Spleen (tissue), 13 donors: ENCODE measurements at regions of chr1 and their contacts with region 1.

Region 1: DNA sequence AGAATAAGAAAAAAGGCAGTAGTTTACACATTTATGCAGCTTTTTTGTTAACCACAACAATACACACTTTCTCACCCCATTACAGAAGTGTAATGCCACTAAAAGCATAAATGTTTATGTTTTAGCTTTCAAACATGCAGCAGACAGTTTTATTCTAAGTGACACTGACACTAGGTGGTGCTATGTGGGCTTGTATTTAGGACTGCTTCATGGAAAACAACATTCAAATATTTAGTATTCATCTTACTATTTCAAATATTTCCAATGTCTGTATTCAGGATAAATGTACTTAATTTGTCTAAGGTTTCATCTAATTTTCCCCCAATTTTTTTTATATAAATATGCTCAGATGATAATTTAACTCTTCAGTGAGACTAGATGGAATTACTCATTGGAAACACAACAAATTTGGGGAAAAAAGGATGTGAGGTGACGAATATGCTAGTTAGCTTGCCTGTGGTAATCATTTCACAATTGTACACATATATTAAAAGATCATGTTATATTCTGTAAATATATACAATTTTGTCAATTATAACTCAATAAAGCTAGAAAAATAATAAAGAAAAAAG is 71.4 kb downstream of the USP1 start:
- DNase-seq: no peak
- H3K4me3 ChIP-seq: no peak overlapping the region
- H3K27ac ChIP-seq: no peak overlapping the region
- H3K4me1 ChIP-seq: no peaks in the 10 kb centered on the region
- H3K27me3 ChIP-seq: no peaks in the 10 kb centered on the region
- CTCF ChIP-seq: peak in 8 of 11 experiments; percentile 9 to 54 (median 44)
- POLR2A ChIP-seq: no peak

Region 2: DNA sequence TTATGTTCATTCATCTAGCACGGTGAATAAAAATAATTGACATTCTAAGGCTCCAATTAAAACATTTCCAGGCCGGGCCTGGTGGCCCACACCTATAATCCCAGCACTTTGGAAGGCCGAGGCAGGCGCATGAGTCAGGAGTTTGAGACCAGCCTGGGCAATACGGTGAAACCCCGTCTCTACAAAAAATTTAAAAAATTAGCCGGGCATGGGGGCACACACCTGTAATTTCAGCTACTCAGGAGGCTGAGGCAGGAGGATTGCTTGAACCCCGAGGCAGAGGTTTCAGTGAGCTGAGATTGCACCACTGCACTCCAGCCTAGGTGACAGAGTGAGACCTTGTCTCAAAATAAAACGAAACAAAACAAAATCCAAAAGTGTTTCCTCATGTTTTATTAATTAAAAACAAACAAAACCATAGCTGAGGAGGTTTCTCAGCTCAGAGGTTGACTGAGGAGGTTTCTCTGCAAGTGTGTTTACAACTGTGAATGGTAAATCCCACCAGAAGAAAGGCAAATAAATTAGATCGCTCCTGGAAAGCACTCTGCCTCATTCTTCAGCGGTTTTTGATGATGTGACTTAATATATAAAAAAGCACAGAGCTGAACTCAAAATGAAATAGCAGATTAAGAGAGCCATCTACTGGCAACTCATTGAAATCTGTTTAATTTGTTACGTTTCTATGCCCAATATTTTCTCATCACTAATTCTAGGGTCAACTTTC is 238.0 kb after region 1 on chr1:
- intact Hi-C with region 1: loop called (anchors 5 kb)
- DNase-seq: no peak
- H3K4me3 ChIP-seq: no peak overlapping the region
- H3K27ac ChIP-seq: no peak overlapping the region
- H3K4me1 ChIP-seq: peaks cover 0 to 5% (median 0%) of the 10 kb centered on the region in 6 donors
- H3K27me3 ChIP-seq: no peaks in the 10 kb centered on the region
- CTCF ChIP-seq: peak in 8 of 11 experiments; percentile 22 to 60 (median 48)
- POLR2A ChIP-seq: no peak